HepG2 (cell line): ENCODE measurements at regions of chr3 and their contacts with region 1.

Region 1: DNA sequence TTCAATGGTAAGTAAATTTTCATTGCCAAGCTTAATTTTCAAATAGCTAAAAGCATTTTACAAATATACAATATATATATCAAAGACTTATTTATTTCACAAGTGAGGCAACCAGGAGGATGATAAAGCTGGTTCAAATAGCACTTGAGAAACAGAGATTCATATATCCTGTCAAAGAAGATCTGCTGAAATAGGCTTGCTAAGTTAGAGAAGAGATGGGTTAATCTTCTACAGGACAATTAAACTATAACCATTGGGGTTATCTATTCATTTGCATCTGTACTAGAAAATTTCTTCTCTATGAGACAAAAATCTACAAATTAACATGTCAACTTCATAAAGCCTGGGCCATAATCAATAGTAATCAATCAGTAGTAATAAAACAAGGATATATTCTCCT is 637.7 kb upstream of the UBE2E2 start:
- DNase-seq: no peak
- ATAC-seq: no peak
- H3K4me3 ChIP-seq: no peak overlapping the region
- H3K27ac ChIP-seq: no peak overlapping the region
- H3K4me1 ChIP-seq: peaks cover 13% of the 10 kb centered on the region
- H3K27me3 ChIP-seq: no peaks in the 10 kb centered on the region
- CTCF ChIP-seq: no peak
- EP300 ChIP-seq: no peak
- POLR2A ChIP-seq: no peak
- RAD21 ChIP-seq: no peak

Region 2: DNA sequence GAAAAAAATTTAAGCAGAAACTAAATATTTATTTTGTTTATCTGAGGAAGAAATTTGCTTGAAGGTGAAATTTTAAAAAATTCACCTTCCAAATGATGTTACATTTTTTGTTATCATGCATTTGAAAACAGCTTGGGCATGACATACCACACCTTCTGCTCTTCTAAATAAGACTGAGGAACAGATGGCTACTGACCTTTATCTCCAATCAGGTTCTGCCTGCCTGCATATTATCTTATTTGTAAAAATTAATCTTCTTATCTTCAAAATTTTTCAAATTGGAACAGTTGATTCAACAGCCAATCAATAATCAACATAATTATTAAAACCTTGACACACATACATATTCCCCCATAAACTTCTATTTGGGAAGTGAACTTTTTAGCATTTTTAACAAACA is 172.5 kb before region 1 on chr3:
- CTCF ChIA-PET with region 1: no interaction called
- POLR2A ChIA-PET with region 1: no interaction called
- in situ Hi-C with region 1: no loop called
- intact Hi-C with region 1: no loop called
- DNase-seq: no peak
- ATAC-seq: no peak
- H3K4me3 ChIP-seq: no peak overlapping the region
- H3K27ac ChIP-seq: no peak overlapping the region
- H3K4me1 ChIP-seq: no peaks in the 10 kb centered on the region
- H3K27me3 ChIP-seq: no peaks in the 10 kb centered on the region
- CTCF ChIP-seq: no peak
- EP300 ChIP-seq: no peak
- POLR2A ChIP-seq: no peak
- RAD21 ChIP-seq: no peak

Region 3: GRCh38 chr3:22439626-22440025 is 125.8 kb before region 1 on chr3:
- CTCF ChIA-PET with region 1: no interaction called
- POLR2A ChIA-PET with region 1: no interaction called
- in situ Hi-C with region 1: no loop called
- intact Hi-C with region 1: no loop called
- DNase-seq: no peak
- ATAC-seq: no peak
- H3K4me3 ChIP-seq: no peak overlapping the region
- H3K27ac ChIP-seq: no peak overlapping the region
- H3K4me1 ChIP-seq: no peaks in the 10 kb centered on the region
- H3K27me3 ChIP-seq: no peaks in the 10 kb centered on the region
- CTCF ChIP-seq: no peak
- EP300 ChIP-seq: no peak
- POLR2A ChIP-seq: no peak
- RAD21 ChIP-seq: no peak

Region 4: GRCh38 chr3:22585504-22585903 is 20.1 kb after region 1 on chr3:
- CTCF ChIA-PET with region 1: no interaction called
- POLR2A ChIA-PET with region 1: no interaction called
- in situ Hi-C with region 1: no loop called
- intact Hi-C with region 1: no loop called
- DNase-seq: no peak
- ATAC-seq: no peak
- H3K4me3 ChIP-seq: no peak overlapping the region
- H3K27ac ChIP-seq: no peak overlapping the region
- H3K4me1 ChIP-seq: peaks cover 16% of the 10 kb centered on the region; the same call in 1 of the 2 replicates
- H3K27me3 ChIP-seq: no peaks in the 10 kb centered on the region
- CTCF ChIP-seq: no peak
- EP300 ChIP-seq: no peak
- POLR2A ChIP-seq: no peak
- RAD21 ChIP-seq: no peak

Region 5: GRCh38 chr3:22612927-22613326 is 47.5 kb after region 1 on chr3:
- CTCF ChIA-PET with region 1: no interaction called
- POLR2A ChIA-PET with region 1: no interaction called
- in situ Hi-C with region 1: no loop called
- intact Hi-C with region 1: loop called (anchors 5 kb)
- DNase-seq: peak; percentile 67
- ATAC-seq: peak; percentile 92
- H3K4me3 ChIP-seq: no peak overlapping the region
- H3K27ac ChIP-seq: no peak overlapping the region
- H3K4me1 ChIP-seq: peaks cover 14% of the 10 kb centered on the region
- H3K27me3 ChIP-seq: no peaks in the 10 kb centered on the region
- CTCF ChIP-seq: no peak
- EP300 ChIP-seq: peak in 1 of 2 experiments; percentile 44; a peak in 1 of 4 replicates
- POLR2A ChIP-seq: no peak
- RAD21 ChIP-seq: no peak

Region 6: DNA sequence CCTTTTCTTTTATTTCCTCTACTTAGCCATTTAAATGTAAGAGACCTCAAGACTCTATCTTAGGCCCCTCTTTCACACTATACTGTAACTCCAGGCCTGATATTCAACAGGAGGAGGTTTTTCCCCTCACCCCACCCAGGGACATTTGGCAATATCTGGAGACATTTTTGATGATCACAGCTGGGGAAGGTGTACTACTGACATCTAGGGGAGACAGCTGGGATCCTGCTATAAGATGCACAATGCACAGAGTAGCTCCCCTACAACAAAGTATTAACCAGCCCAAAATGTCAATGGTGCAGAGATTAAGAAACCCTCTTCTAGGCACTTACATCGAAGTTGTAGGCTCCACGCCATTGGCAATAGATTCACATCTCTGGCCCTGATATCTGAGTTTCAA is 120.2 kb after region 1 on chr3:
- CTCF ChIA-PET with region 1: no interaction called
- POLR2A ChIA-PET with region 1: no interaction called
- in situ Hi-C with region 1: loop called (anchors 10 kb)
- intact Hi-C with region 1: loop called (anchors 1 kb)
- DNase-seq: peak; percentile 4
- ATAC-seq: no peak
- H3K4me3 ChIP-seq: no peak overlapping the region
- H3K27ac ChIP-seq: no peak overlapping the region
- H3K4me1 ChIP-seq: no peaks in the 10 kb centered on the region
- H3K27me3 ChIP-seq: no peaks in the 10 kb centered on the region
- CTCF ChIP-seq: peak; percentile 32
- EP300 ChIP-seq: no peak
- POLR2A ChIP-seq: no peak
- RAD21 ChIP-seq: no peak

Region 7: DNA sequence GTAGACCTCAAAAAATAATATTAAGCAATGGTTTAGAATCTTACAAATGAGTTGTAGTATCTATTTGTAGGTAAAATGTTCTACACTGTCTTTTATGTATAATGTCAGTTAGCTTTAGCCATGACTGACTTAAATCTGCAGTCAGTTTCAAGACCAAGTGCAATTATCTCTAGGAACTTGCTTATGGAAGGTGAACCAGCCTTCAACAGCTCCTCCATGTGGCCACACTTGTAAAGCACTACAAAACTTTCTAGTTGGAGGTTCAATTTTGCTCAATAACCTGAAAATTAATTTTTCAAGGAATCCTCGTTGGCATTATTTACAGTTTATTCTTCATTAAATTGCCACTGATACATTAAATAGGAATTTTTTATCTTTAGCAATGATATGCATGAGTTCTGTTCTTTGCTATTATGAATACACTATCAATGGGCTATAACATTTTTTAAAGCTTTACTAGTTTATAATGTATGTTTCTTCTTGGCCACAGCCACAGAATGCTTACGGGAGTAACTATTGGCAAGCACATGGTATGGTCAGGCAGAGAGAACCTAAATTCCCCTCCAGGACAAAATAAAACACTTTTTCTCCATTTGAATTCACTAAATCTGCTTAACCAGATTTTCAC is 322.4 kb after region 1 on chr3:
- CTCF ChIA-PET with region 1: no interaction called
- POLR2A ChIA-PET with region 1: no interaction called
- in situ Hi-C with region 1: no loop called
- intact Hi-C with region 1: loop called (anchors 1 kb)
- DNase-seq: no peak
- ATAC-seq: no peak
- H3K4me3 ChIP-seq: no peak overlapping the region
- H3K27ac ChIP-seq: no peak overlapping the region
- H3K4me1 ChIP-seq: no peaks in the 10 kb centered on the region
- H3K27me3 ChIP-seq: no peaks in the 10 kb centered on the region
- CTCF ChIP-seq: no peak
- EP300 ChIP-seq: no peak
- POLR2A ChIP-seq: no peak
- RAD21 ChIP-seq: no peak